HAP-1 (cell line): ENCODE measurements at regions of chr10 and their contacts with region 1.

Region 1: GRCh38 chr10:28241741-28242399 is 61.0 kb downstream of the MPP7 start:
- DNase-seq: peak; percentile 51 to 62
- H3K4me3 ChIP-seq: no peak overlapping the region
- H3K4me1 ChIP-seq: no peaks in the 10 kb centered on the region
- H3K27me3 ChIP-seq: no peaks in the 10 kb centered on the region; the same call in none of the 2 replicates

Region 2: GRCh38 chr10:27446091-27446918 is 795.6 kb before region 1 on chr10:
- in situ Hi-C with region 1: loop called (anchors 25 kb)
- DNase-seq: peak in 1 of 2 experiments; percentile 43
- H3K4me3 ChIP-seq: no peak overlapping the region
- H3K4me1 ChIP-seq: no peaks in the 10 kb centered on the region
- H3K27me3 ChIP-seq: no peaks in the 10 kb centered on the region

Region 3: DNA sequence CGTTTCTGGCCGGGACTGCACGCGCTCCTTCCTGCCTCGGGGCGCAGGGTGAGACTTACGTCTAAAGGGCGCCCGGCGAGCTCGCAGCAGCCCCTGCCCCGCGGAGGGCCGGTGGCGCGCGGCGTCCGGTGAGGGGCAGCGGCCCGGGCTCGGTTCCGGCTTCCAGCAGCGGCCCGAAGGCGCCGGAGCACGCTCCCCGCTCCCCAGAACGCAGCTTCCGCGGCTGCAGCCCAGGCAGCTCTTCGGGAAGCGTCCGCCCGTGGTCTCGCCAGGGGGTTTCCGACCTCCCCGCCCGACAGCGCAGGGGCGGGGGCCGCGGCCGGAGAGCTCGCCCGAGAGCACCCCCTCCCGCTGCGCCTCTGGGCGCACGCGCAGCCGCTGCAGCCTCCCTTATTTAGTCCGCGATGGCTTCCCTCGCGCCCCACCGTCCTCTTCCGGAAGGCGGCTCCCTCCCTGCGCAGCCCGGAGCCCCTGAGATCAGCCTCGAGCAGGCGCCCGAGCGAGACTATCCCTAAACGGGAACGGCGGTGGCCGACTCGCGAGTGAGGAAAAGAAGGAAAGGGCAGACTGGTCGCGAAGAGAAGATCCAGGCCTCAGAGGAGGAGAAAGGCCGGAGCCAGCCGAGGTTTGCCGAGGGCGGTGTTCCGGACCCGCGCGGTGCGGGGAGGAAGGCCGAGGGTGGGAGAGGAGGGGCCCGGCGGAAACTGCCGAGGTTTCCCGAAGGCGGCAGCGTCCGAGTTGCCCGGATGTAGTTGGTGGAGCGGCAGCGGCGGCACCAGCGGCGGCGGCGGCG is 290.7 kb after region 1 on chr10 and contains the start of gene WAC:
- in situ Hi-C with region 1: no loop called
- DNase-seq: peak; percentile 88 to 96
- H3K4me3 ChIP-seq: peak within 1 kb of the TSS; percentile 83
- H3K4me1 ChIP-seq: peaks cover 7% of the 10 kb centered on the region
- H3K27me3 ChIP-seq: no peaks in the 10 kb centered on the region